Heart left ventricle (tissue), 16 donors: ENCODE measurements at regions of chr1 and their contacts with region 1.

Region 1: DNA sequence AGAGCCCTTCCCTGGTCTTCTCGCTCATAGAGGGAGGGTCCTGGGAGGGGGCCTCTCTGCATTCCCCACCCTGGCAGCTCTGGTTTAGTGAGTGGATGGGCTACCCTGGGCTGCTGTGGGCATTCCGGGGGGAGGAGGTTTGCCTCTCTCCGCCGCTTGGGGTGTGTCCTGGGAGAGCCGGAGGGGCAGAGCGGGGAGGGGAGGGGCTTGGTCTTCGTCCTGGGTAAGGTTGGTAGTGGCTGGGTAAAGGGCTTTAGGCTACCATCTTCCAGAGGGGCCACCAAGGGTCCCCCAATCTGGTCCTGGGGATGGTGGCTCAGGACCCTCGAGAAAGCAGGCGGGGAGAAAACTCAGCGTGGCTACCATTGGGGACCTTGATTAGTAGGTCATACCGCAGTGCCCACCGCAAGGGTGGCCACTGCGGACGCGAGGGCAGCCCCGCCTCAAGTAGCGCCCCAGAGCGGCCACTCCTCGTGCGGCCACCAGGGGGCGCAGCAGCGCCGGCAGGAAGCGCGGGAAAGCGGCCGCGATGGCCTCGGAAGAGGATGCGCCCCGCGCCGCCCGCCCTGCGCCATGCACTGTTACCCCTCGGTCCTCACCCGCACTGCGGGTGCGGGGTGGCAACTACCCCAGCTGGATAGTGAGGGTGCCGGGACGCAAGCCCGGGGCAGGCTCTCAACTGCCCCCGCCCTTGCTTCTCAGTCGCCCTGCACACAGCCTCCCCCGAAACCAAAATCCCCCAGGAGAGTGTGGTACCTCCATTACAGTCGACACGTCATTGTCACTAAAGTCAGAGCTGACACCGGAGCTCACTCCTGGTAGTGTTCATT is 44.1 kb upstream of the SLC25A33 start:
- DNase-seq: peak; percentile 33 to 77 (median 49)
- ATAC-seq: peak in 3 of 4 donors; percentile 54 to 80 (median 65)
- H3K4me3 ChIP-seq: peak overlapping the region in 9 of 12 donors; percentile 26 to 53 (median 39)
- H3K27ac ChIP-seq: no peak overlapping the region
- H3K4me1 ChIP-seq: peaks cover 0 to 10% (median 4%) of the 10 kb centered on the region in 12 donors
- H3K27me3 ChIP-seq: peaks cover 0 to 8% (median 0%) of the 10 kb centered on the region in 9 donors
- CTCF ChIP-seq: peak; percentile 88 to 100 (median 98)
- POLR2A ChIP-seq: no peak

Region 2: GRCh38 chr1:8910914-8911313 is 584.2 kb before region 1 on chr1:
- intact Hi-C with region 1: loop called in 1 of 10 experiments (anchors 10 kb)
- DNase-seq: no peak
- ATAC-seq: no peak
- H3K4me3 ChIP-seq: no peak overlapping the region
- H3K27ac ChIP-seq: no peak overlapping the region
- H3K4me1 ChIP-seq: peaks cover 0 to under 1% (median 0%) of the 10 kb centered on the region in 12 donors
- H3K27me3 ChIP-seq: no peaks in the 10 kb centered on the region
- CTCF ChIP-seq: no peak
- POLR2A ChIP-seq: no peak

Region 3: GRCh38 chr1:9110669-9111356 is 384.3 kb before region 1 on chr1:
- intact Hi-C with region 1: loop called in 3 of 10 experiments (anchors 2 to 5 kb)
- DNase-seq: peak; percentile 83 to 93 (median 89)
- ATAC-seq: peak; percentile 48 to 82 (median 78)
- H3K4me3 ChIP-seq: no peak overlapping the region
- H3K27ac ChIP-seq: no peak overlapping the region
- H3K4me1 ChIP-seq: peaks cover 0 to 23% (median 6%) of the 10 kb centered on the region in 12 donors
- H3K27me3 ChIP-seq: no peaks in the 10 kb centered on the region
- CTCF ChIP-seq: peak; percentile 85 to 97 (median 92)
- POLR2A ChIP-seq: no peak

Region 4: DNA sequence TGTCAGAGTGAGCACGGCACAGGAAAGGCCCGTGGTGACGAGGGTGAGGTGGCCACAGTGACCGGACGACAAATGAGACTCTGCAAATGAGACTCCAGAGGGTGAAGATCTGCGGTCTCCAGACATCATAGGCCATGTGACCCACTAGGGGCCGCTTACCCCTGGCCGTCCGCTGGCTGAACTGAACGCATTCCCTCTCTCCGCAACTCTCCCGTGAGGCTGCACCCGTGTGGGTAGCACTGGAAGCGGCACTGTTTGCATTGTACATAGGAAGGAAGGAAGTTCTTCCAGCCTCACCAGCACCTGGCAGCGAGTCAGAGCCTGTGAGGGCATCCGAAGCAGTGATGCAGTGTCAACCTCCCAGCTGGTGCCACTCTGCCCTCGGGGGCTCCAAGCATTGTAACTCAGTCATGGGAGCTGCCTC is 226.1 kb before region 1 on chr1:
- intact Hi-C with region 1: loop called in 6 of 10 experiments (anchors 1 to 5 kb)
- DNase-seq: no peak
- ATAC-seq: peak in 2 of 4 donors; percentile 14 to 19
- H3K4me3 ChIP-seq: no peak overlapping the region
- H3K27ac ChIP-seq: no peak overlapping the region
- H3K4me1 ChIP-seq: peaks cover 0 to 36% (median 6%) of the 10 kb centered on the region in 12 donors
- H3K27me3 ChIP-seq: no peaks in the 10 kb centered on the region
- CTCF ChIP-seq: no peak
- POLR2A ChIP-seq: no peak

Region 5: DNA sequence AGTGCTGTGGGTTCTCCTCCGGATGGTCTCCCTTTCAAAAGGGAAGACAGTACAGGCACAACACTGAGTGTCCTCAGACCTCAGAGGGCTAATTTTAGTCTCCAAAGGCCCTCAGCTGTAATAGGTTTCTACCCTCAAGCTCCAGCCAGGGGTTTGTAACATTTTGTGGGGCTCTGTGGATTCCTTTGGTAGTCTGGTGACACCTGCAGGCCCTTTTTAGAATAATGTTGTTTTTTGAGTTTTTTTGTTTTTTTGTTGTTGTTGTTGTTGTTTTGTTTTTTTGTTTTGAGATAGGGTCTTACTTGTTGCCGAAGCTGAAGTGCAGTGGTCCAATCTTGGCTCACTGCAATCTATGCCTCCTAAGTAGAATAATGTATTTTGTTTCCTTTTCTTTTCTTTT is 78.6 kb after region 1 on chr1:
- intact Hi-C with region 1: loop called (anchors 1 to 2 kb)
- DNase-seq: no peak
- ATAC-seq: peak in 3 of 4 donors; percentile 61 to 75 (median 64)
- H3K4me3 ChIP-seq: no peak overlapping the region
- H3K27ac ChIP-seq: no peak overlapping the region
- H3K4me1 ChIP-seq: peaks cover 0 to 4% (median 0%) of the 10 kb centered on the region in 12 donors
- H3K27me3 ChIP-seq: no peaks in the 10 kb centered on the region
- CTCF ChIP-seq: peak; percentile 9 to 58 (median 46)
- POLR2A ChIP-seq: no peak

Region 6: GRCh38 chr1:9687120-9687873 is 192.2 kb after region 1 on chr1:
- intact Hi-C with region 1: no loop called
- DNase-seq: peak; percentile 32 to 74 (median 48)
- ATAC-seq: peak in 3 of 4 donors; percentile 18 to 61 (median 47)
- H3K4me3 ChIP-seq: peak overlapping the region; percentile 30 to 92 (median 62)
- H3K27ac ChIP-seq: peak overlapping the region in 4 of 12 donors; percentile 42 to 66 (median 54)
- H3K4me1 ChIP-seq: peaks cover 0 to 62% (median 26%) of the 10 kb centered on the region in 12 donors
- H3K27me3 ChIP-seq: no peaks in the 10 kb centered on the region
- CTCF ChIP-seq: no peak
- POLR2A ChIP-seq: no peak

Region 7: DNA sequence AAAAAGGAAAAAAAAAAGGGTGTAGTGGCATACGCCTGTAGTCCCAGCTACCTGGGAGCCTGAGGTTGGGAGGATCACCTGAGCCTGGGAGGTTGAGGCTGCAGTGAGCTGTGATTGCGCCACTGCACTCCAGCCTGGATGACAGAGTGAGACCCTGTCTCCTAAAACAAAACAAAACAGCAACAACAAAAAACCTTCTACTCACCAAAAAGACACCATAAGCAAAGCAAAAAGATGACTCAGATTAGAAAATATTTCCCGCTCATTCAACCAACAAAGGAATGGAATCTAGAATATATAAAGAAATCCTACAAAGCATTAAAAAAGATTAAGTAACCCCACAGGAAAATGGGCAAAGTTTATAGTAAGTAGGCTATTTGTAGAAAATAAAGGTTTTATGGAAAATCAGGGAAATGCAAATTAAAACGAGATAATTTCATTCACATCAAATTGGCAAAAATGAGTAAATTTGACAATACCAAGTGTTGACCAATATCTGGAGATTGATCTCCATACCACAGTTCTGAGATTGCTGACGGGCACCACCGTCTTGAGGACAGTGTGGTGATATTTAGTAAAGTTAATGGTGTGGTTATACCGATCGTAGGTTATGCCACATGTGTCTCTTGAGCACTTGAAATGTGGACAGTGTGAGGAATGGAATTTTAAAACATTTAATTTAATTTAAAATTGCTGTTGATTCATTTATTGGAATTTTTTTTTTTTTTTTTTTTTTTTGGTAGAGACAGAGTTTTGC is 210.4 kb after region 1 on chr1:
- intact Hi-C with region 1: no loop called
- DNase-seq: no peak
- ATAC-seq: no peak
- H3K4me3 ChIP-seq: no peak overlapping the region
- H3K27ac ChIP-seq: peak overlapping the region in 1 of 12 donors; percentile 59
- H3K4me1 ChIP-seq: peaks cover 0 to 46% (median 0%) of the 10 kb centered on the region in 12 donors
- H3K27me3 ChIP-seq: no peaks in the 10 kb centered on the region
- CTCF ChIP-seq: no peak
- POLR2A ChIP-seq: no peak

Region 8: DNA sequence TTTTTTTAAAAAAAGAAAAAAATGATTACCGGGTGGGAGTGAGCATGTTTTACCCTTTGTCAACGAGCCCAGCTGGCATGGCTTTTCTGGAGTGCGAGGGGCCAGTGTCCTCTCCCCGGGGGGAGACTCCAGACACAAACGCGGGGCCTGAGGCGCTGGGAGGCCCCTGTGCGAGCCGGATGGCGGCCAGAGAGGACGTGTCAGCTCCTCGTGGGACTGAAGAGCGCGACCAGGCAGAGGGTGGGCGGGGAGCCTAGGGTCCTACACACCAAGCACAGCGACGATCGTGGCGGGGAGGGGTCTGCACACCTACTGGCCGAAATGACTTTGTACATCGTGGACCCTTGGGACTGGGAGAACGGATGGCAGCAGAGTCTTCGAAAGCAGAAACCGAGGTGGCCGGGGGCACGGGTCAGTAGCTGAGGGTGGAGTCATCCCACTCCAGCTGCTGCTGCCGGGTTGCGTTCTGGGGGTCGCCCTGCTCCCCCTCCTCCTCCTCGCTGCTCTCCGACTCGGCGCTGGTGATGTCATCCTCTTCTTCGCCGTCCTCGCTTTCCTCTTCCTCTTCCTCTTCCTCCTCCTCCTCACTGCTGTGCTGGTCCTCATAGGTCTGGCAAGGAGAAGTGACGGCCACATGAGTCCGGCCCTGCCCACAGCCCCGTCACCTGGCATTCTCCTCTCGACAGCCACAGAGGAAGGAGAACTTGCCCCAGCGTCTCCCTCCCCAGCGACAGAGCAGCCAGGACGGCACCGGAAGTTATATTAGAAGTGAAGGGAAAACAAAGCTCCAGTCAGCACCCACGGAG is 235.2 kb after region 1 on chr1:
- intact Hi-C with region 1: no loop called
- DNase-seq: peak; percentile 55 to 78 (median 61)
- ATAC-seq: peak in 3 of 4 donors; percentile 32 to 81 (median 79)
- H3K4me3 ChIP-seq: no peak overlapping the region
- H3K27ac ChIP-seq: peak overlapping the region in 1 of 12 donors; percentile 70
- H3K4me1 ChIP-seq: peaks cover 0 to 12% (median 0%) of the 10 kb centered on the region in 12 donors
- H3K27me3 ChIP-seq: no peaks in the 10 kb centered on the region
- CTCF ChIP-seq: no peak
- POLR2A ChIP-seq: no peak